Endothelial cell of umbilical vein (primary cell): ENCODE measurements at regions of chr1 and their contacts with region 1.

Region 1: DNA sequence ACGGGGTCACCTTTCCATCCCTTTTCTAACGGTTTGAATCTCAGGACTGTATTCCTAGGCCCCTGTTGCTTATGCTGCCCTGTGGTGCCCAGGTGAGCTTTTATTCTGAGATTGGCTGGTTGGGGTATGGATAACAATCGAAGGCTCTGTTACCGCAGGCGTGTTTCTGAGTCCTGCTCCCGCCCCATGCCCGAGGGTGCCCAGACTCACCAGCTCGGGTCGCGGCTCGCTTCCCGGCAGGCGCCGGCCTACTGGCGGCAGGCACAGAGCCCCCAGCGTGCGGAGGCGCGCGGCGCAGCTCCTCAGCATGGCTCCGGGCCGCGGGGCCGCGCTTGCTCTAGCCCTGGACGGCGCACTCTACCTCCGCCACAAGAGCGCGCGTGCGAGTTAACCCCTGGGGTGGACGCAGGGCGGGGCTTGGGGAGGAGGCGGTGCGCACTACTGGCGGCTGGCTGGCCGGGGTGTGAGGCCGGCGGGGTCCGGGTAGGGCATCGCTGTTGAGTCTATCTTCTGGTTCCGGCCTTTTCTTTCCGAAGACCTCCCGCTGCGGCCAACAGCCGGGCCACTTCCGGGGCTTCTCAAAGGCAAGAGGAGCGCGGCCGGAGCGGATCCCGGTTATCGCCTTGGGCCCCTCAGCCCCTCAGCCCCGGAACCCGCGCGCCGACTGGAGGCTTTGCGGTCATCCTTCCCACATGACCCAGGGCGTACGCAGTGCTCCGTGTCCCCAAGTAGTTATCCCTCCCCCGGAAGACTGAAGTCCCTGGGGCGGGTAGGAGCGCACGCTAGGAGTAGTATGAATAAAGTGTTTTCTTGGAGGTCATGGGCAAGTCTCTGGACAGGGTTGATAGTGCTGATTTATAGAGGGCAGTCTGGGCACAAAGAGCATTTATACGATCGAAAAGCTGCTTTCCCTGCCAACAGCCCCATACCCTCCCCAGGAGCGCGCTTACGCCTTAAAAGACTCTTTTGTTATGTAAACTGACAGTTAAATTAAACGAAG is at the start of gene THEM4:
- DNase-seq: peak; percentile 93
- H3K4me3 ChIP-seq: peak within 1 kb of the TSS; percentile 48 to 72 (median 50)
- H3K27ac ChIP-seq: peak within 1 kb of the TSS; percentile 65
- H3K4me1 ChIP-seq: peaks cover 27% of the 10 kb centered on the region
- H3K27me3 ChIP-seq: peaks cover 2 to 7% of the 10 kb centered on the region in 2 experiments
- CTCF ChIP-seq: peak; percentile 25 to 46
- POLR2A ChIP-seq: peak; percentile 87
- total RNA-seq, gene THEM4: 22.1 and 24.9 TPM in 2 replicates

Region 2: DNA sequence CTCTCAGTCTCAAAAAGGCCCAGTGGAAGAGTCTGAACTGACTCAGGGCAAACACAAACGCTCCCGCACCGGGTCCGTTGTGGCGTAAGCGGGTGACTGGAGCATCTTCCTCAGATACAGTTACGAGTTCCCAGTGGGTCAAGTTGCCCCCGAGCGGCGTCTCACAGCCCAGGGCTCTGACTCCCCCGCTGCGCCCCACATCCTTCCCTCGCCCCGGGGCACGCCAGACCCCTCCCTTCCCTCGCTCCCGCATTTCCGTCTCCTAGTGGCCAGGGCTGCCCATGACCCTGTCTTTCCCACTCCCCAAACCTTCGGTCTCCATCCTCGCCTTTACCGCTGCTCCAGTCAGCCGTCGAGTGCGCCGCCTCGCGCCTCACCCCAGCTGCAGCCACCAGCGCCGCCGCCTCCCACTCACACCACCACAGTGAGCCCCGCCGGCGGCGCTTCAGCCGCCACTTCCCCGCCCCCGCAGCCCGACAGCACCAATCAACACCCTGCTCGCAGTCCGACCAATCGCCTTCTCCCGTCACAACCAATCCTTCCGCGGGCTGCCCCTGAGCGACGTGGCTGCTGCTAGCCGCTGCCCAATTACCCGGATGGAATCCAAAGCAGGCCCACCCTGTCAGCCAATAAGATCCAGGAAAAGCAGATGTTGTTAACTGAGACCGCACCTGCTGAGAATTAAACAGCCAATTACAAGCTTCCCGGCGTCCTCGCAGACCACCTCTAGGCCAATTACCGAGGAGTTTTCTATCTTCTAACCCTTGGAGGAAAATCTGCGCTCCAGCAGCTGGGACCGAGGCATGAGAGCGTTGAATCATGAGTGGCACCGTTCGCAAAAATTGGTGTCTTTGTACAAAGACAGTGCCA is 119.1 kb before region 1 on chr1 and contains the start of gene TDRKH:
- CTCF ChIA-PET with region 1: no interaction called
- POLR2A ChIA-PET with region 1: no interaction called
- dilution Hi-C with region 1: no loop called
- intact Hi-C with region 1: no loop called
- DNase-seq: peak; percentile 100
- H3K4me3 ChIP-seq: peak within 1 kb of the TSS; percentile 43 to 94 (median 88)
- H3K27ac ChIP-seq: no peak within 1 kb of the TSS
- H3K4me1 ChIP-seq: peaks cover 12% of the 10 kb centered on the region
- H3K27me3 ChIP-seq: peaks cover 0 to 1% of the 10 kb centered on the region in 2 experiments
- CTCF ChIP-seq: peak in 1 of 2 donors; percentile 39
- POLR2A ChIP-seq: peak; percentile 17
- total RNA-seq, gene TDRKH: 9.3 and 9.6 TPM in 2 replicates

Region 3: DNA sequence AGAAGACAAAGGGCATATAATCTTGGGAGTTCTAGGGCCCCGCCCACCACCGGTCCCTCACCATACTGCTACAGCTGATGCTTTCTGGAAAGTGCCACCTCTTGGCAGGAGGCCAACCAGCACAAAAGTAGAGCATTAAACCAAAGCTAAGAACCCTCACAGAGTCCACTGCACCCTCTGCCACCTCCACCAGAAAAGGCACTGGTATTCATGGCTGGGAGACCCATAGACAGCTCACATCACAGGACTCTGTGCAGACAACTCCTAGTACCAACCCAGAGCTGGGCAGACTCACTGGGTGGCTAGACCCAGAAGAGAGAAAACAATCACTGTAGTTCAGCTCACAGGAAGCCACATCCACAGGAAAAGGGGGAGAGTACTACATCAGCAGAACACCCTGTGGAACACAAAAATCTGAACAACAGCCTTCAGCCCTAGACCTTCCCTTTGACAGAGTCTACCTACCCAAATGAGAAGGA is 10.9 kb before region 1 on chr1:
- CTCF ChIA-PET with region 1: interaction called, 17 read pairs
- POLR2A ChIA-PET with region 1: interaction called, 4 read pairs
- dilution Hi-C with region 1: no loop called
- intact Hi-C with region 1: no loop called
- DNase-seq: peak; percentile 18
- H3K4me3 ChIP-seq: no peak overlapping the region
- H3K27ac ChIP-seq: peak overlapping the region; percentile 7
- H3K4me1 ChIP-seq: peaks cover 12% of the 10 kb centered on the region
- H3K27me3 ChIP-seq: no peaks in the 10 kb centered on the region
- CTCF ChIP-seq: no peak
- POLR2A ChIP-seq: no peak